Adrenal gland (tissue), 19 donors: ENCODE measurements at regions of chr11 and their contacts with region 1.

Region 1: GRCh38 chr11:95138448-95138847 is 48.8 kb downstream of the ENDOD1 start:
- DNase-seq: no peak
- H3K4me3 ChIP-seq: no peak overlapping the region
- H3K27ac ChIP-seq: no peak overlapping the region
- H3K4me1 ChIP-seq: peaks cover 9 to 15% of the 10 kb centered on the region in 2 donors
- H3K27me3 ChIP-seq: no peaks in the 10 kb centered on the region
- CTCF ChIP-seq: peak in 3 of 6 experiments; percentile 14 to 27 (median 15)
- POLR2A ChIP-seq: no peak

Region 2: DNA sequence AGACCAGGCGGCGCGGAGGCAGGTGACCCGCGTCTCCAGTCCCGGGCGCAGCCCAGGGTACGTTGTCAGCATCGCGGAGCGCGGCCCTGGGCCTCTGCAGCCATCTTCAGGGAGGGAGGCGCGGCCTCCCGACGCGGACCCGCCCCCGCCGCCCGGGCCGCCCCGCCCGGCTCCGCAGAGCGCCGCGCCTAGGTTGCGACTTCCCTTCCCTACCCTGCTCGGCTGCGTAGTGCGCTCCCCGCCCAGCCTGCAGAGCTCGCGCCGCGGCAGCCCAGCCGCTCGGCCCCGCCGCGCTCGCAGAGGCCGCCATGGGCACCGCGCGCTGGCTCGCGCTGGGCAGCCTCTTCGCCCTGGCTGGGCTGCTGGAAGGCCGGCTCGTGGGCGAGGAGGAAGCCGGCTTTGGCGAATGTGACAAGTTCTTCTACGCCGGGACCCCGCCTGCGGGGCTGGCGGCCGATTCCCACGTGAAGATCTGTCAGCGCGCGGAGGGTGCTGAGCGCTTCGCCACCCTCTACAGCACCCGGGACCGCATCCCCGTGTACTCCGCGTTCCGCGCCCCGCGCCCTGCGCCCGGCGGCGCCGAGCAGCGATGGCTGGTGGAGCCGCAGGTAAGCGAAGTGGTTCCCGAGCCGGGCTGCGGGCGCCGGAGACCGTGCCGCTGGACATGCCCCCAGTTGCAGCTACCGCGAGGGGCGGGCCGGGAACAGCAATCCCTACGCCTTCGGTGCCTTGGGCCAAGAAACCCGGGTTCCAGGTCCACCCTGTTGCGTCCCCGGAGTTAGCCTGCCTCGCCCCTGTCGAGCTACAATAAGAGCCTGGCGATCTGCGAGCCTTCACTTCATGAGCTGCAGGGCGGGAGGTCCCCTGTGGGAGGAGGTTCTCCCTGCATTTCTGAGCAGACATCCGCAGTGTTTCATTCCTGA is 48.6 kb before region 1 on chr11 and contains the start of gene ENDOD1:
- intact Hi-C with region 1: loop called in 1 of 2 experiments (anchors 5 kb)
- DNase-seq: peak; percentile 76 to 88 (median 83)
- H3K4me3 ChIP-seq: peak within 1 kb of the TSS; percentile 21 to 78 (median 42)
- H3K27ac ChIP-seq: peak within 1 kb of the TSS; percentile 19 to 97 (median 87)
- H3K4me1 ChIP-seq: peaks cover 13 to 31% of the 10 kb centered on the region in 2 donors
- H3K27me3 ChIP-seq: no peaks in the 10 kb centered on the region
- CTCF ChIP-seq: peak in 2 of 6 experiments; percentile 26 to 41
- POLR2A ChIP-seq: peak; percentile 80 to 94
- total RNA-seq, gene ENDOD1: 17.6 to 61.6 (median 33.2) TPM

Region 3: DNA sequence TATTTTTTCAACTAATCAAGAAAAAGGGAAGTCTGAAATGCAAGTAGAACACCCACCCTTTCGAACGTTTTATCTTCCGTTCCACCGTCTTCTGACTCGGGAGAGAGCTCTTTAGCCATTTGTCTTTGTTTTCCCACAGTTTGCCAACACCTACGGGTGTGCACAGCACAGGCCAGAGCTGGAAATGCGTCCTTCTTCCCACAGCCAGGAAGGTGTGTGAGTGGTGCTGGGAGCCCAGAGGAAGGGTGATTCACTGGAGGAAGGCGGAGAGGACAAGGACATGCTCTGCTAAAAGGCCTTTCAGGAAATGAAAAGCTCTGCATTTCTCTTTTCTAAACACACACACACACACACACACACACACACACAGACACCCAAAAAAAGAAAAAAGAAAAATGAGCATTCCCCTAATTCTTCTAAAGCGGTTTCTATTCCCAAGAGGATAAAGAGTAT is 30.3 kb before region 1 on chr11:
- intact Hi-C with region 1: loop called in 1 of 2 experiments (anchors 5 kb)
- DNase-seq: peak; percentile 63 to 88 (median 74)
- H3K4me3 ChIP-seq: no peak overlapping the region
- H3K27ac ChIP-seq: peak overlapping the region in 4 of 5 donors; percentile 5 to 67 (median 40)
- H3K4me1 ChIP-seq: peaks cover 9 to 22% of the 10 kb centered on the region in 2 donors
- H3K27me3 ChIP-seq: no peaks in the 10 kb centered on the region
- CTCF ChIP-seq: no peak
- POLR2A ChIP-seq: peak in 1 of 2 donors; percentile 32

Region 4: DNA sequence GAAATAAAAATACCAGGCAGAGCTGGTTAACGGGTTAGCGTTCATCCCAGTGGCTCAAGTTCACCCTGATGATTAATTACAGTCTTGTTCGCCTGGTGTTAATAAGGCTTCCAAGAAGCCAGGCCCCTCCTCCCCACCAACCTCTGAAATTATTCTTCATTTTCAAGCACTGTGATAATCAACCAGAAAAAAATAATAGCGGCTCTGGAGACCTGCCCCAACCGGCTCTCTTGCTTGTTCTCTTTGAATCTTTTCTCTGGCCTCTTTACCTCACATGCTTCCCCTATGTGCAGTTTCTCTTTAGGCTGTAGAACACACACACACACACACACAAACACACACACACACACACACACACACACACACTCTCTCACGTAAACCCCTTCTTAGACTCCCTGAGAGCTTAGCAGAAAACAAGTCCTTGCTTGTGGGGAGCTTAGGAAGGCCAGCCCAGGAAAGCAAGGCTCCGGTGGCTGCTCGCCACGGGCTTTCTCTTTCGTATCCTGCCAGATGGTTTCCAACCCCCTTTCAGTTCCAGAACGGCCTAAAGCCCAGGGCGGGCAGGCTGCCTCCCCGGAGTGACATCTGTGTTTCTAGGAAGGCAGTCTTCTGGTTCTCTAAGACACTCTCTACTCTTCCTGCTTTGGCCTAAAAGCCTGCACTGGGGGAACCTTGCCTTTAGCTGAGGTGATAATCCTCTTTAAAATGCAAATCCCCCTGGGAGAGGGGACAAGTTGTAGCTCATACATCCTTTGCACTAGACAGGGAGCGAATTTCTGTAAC is 198.9 kb after region 1 on chr11:
- intact Hi-C with region 1: no loop called
- DNase-seq: peak; percentile 33 to 74 (median 44)
- H3K4me3 ChIP-seq: no peak overlapping the region
- H3K27ac ChIP-seq: peak overlapping the region; percentile 31 to 86 (median 63)
- H3K4me1 ChIP-seq: peaks cover 15 to 34% of the 10 kb centered on the region in 2 donors
- H3K27me3 ChIP-seq: no peaks in the 10 kb centered on the region
- CTCF ChIP-seq: no peak
- POLR2A ChIP-seq: no peak